HCT116 (cell line): ENCODE measurements at regions of chrX and their contacts with region 1.

Region 1: GRCh38 chrX:48917139-48918001 is 1.5 kb downstream of the PIM2 start:
- DNase-seq: peak; percentile 74
- ATAC-seq: peak; percentile 69
- H3K4me3 ChIP-seq: peak overlapping the region; percentile 63 to 69
- H3K27ac ChIP-seq: peak overlapping the region; percentile 78
- H3K4me1 ChIP-seq: peaks cover 5 to 25% of the 10 kb centered on the region in 2 experiments
- H3K27me3 ChIP-seq: no peaks in the 10 kb centered on the region
- CTCF ChIP-seq: peak in 2 of 3 experiments; percentile 82 to 87; a peak in 4 of 6 replicates
- POLR2A ChIP-seq: no peak
- RAD21 ChIP-seq: no peak

Region 2: DNA sequence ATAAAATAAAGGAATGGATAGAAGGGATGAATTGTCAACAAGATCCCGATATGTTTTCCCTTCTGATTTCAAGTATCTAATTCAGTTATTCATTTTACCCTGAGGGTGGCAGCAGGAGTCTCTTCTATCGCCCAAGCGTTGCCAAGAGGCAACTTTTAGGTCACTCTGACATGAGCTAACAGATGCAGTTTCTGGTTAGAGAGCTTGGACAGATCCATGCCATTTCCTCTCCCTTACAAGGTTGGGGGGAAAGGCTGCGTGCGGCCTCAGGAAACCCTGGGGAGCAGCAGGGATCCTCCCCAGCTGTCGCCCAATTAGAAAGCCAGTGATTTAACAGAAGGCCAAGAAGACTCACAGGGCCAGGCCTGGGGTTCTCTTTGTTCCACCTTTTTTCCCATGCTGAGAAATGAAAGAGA is 269.0 kb before region 1 on chrX:
- CTCF ChIA-PET with region 1: no interaction called
- POLR2A ChIA-PET with region 1: no interaction called
- RAD21 ChIA-PET with region 1: no interaction called
- intact Hi-C with region 1: loop called (anchors 2 kb)
- DNase-seq: no peak
- ATAC-seq: peak; percentile 69
- H3K4me3 ChIP-seq: no peak overlapping the region
- H3K27ac ChIP-seq: no peak overlapping the region
- H3K4me1 ChIP-seq: no peaks in the 10 kb centered on the region
- H3K27me3 ChIP-seq: no peaks in the 10 kb centered on the region
- CTCF ChIP-seq: peak; percentile 7 to 22 (median 20); a peak in 1 of 6 replicates
- POLR2A ChIP-seq: no peak
- RAD21 ChIP-seq: peak; percentile 63

Region 3: GRCh38 chrX:48761674-48762471 is 155.5 kb before region 1 on chrX and contains the start of gene GLOD5:
- CTCF ChIA-PET with region 1: no interaction called
- POLR2A ChIA-PET with region 1: no interaction called
- RAD21 ChIA-PET with region 1: no interaction called
- intact Hi-C with region 1: loop called (anchors 5 kb)
- DNase-seq: peak; percentile 35
- ATAC-seq: peak; percentile 98
- H3K4me3 ChIP-seq: no peak within 1 kb of the TSS
- H3K27ac ChIP-seq: no peak within 1 kb of the TSS
- H3K4me1 ChIP-seq: peaks cover 3 to 7% of the 10 kb centered on the region in 2 experiments; a peak in 1 of 4 replicates
- H3K27me3 ChIP-seq: no peaks in the 10 kb centered on the region
- CTCF ChIP-seq: peak; percentile 21 to 57 (median 42); a peak in 4 of 6 replicates
- POLR2A ChIP-seq: no peak
- RAD21 ChIP-seq: peak; percentile 86
- total RNA-seq, gene GLOD5: not detected

Region 4: GRCh38 chrX:48957827-48958634 is 40.7 kb after region 1 on chrX:
- CTCF ChIA-PET with region 1: no interaction called
- POLR2A ChIA-PET with region 1: no interaction called
- RAD21 ChIA-PET with region 1: no interaction called
- intact Hi-C with region 1: loop called (anchors 2 kb)
- DNase-seq: peak; percentile 93
- ATAC-seq: peak; percentile 92
- H3K4me3 ChIP-seq: peak overlapping the region; percentile 76 to 77
- H3K27ac ChIP-seq: peak overlapping the region; percentile 93
- H3K4me1 ChIP-seq: peaks cover 11 to 18% of the 10 kb centered on the region in 2 experiments
- H3K27me3 ChIP-seq: no peaks in the 10 kb centered on the region
- CTCF ChIP-seq: no peak
- POLR2A ChIP-seq: no peak
- RAD21 ChIP-seq: no peak